Activated CD8-positive, alpha-beta memory T cell treated with anti-CD3 and anti-CD28 coated beads, Interleukin-2, amount 10 ng/mL, durations not matched to agents 7 days and 5 days (primary cell): ENCODE measurements at regions of chr7 and their contacts with region 1.

Region 1: DNA sequence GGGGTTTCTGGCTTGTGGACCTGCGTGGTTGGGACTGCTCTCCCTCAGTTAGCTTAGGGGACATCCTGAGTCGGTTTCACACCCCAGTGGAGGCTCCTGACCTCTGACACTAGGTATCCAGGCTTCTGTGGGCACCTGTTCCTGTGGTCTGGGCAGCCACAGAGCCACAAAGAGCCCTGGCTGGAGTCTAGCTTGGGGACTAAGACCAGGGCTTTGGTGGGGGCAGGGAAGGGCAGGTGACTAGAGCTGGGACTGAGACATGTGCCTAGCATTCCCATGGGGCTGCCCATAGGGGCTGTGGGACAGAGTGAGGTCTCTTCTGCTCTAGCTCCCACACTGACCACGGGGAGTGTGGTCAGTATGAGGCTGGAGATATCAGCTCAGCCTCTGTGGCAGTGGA is 4.0 kb upstream of the TMEM270 start:
- DNase-seq: no peak
- ATAC-seq: no peak
- H3K4me3 Mint-ChIP-seq: no peak overlapping the region
- H3K27ac Mint-ChIP-seq: no peak overlapping the region
- H3K4me1 Mint-ChIP-seq: peaks cover 14% of the 10 kb centered on the region
- H3K27me3 Mint-ChIP-seq: peaks cover 31% of the 10 kb centered on the region

Region 2: GRCh38 chr7:73842247-73842895 is 14.6 kb before region 1 on chr7 and contains the start of gene METTL27:
- CTCF ChIA-PET with region 1: interaction called, 40 read pairs
- DNase-seq: peak; percentile 95
- ATAC-seq: peak; percentile 100
- H3K4me3 Mint-ChIP-seq: peak within 1 kb of the TSS; percentile 76
- H3K27ac Mint-ChIP-seq: peak within 1 kb of the TSS; percentile 83
- H3K4me1 Mint-ChIP-seq: peaks cover 12% of the 10 kb centered on the region
- H3K27me3 Mint-ChIP-seq: peaks cover 10% of the 10 kb centered on the region
- total RNA-seq, gene METTL27: 0.55 TPM in 1 of 2 experiments, not detected in the other

Region 3: GRCh38 chr7:73885975-73886798 is 29.2 kb after region 1 on chr7:
- CTCF ChIA-PET with region 1: no interaction called
- DNase-seq: no peak
- ATAC-seq: no peak
- H3K4me3 Mint-ChIP-seq: no peak overlapping the region
- H3K27ac Mint-ChIP-seq: no peak overlapping the region
- H3K4me1 Mint-ChIP-seq: peaks cover 10% of the 10 kb centered on the region
- H3K27me3 Mint-ChIP-seq: peaks cover 16% of the 10 kb centered on the region